ENCODE measurements at regions of chr3 and their contacts with region 1.

Region 1: DNA sequence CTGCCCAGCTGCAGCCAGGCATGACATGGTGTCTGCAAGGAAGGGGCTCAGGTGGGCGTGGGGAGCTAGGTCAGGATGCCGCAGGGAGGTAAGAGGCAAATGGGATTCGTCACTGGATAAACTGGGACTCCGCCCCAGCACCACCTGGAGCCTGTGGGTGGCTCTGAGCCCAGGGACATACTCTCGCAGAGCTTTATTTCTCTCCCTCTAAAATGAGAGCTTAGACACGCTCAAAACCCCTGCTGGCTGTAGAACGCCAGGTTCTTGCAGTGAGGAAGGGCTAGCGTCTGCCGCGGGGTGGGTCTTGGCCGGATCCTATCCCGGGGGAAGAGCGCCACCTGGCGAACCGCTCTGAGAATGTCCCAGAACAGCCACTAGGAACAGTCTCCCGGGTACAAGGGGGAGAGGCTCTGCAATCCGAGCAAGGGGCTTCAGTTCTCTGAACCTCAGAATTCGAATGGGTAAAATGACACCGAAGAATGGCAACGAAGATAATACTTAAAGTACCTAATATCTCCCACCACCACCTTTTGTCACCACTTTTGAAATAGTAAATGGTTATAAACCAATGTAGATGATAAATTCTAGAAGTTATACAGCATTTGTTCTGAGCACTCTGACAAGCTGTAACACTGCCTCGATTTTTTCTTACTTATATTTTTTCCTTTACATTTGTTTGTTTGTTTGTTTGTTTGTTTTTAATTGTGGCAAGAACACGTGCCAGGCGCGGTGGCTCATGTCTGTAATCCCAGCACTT is 53.2 kb upstream of the SRGAP3 start:
- DNase-seq: peak; percentile 83
- H3K4me3 Mint-ChIP-seq: no peak overlapping the region
- H3K27ac Mint-ChIP-seq: peak overlapping the region; percentile 23
- H3K4me1 Mint-ChIP-seq: peaks cover 14% of the 10 kb centered on the region
- H3K27me3 Mint-ChIP-seq: no peaks in the 10 kb centered on the region

Region 2: DNA sequence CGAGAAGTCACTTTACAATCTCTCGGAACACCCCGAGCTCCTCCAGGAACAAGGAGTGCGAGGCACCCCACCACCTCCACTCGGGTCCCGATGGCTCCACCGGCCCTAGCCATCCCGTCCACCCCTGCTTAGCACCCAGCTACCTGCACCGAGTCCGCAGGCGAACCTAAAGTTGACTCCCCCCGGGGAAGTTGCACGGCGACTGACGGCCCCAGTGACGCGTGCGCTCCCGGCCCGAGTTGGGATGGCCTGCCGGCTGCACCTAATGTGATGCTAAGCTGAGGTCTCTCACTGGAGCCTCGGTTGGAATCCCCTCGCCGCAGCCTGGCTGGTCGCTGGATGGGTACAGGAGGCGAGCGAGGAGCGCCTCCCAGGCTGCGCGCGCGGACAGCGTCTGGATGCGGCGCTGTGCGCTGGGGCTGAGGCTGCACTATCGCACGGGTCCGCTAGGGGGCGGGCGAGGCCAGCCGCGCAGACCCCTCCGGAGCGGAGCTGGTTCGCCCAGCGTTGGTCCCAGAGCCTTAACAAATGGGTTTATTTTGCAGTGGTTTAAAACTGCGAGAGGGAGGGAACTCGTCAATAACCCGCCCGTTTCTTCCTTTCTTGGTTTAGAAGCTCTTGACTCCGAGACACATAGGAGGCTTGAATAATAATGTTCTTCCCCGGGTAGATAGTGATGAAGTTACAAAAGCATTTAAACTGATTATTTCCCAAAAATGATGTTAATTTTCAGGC is 533.3 kb before region 1 on chr3 and contains the start of gene OXTR:
- CTCF ChIA-PET with region 1: no interaction called
- POLR2A ChIA-PET with region 1: no interaction called
- intact Hi-C with region 1: loop called (anchors 5 kb)
- DNase-seq: peak; percentile 69
- H3K4me3 Mint-ChIP-seq: peak within 1 kb of the TSS; percentile 1
- H3K27ac Mint-ChIP-seq: no peak within 1 kb of the TSS
- H3K4me1 Mint-ChIP-seq: peaks cover 15% of the 10 kb centered on the region
- H3K27me3 Mint-ChIP-seq: peaks cover 32% of the 10 kb centered on the region
- total RNA-seq, gene OXTR: 0.64 to 1.1 TPM

Region 3: DNA sequence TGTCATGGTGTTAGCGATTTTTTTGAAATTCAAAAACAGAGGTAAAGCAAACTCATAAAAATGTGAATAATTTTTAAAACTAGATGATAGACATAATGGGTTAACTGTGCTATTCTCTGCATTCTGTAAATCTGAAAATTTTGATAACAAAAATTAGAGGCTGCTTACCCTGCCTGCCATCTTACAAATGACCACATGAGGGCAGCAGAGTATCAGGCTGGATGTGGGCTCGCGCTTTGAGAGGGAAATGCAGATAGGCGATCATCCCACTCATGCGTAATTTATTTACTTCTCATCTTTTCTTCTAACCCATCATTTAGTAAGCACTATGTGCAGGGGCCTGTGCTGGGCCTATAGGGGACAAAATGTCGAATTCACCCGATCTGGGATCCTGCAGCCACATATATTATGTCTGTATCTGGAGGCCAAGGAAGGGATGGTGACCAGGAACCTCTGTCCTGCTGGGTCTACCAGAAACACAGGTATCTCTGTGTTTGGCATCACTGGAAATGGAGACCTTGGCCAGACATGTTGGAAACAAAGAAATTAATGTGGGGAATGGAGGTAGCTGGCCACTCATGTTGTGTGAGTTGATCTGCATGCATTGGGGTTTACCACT is 331.5 kb before region 1 on chr3:
- CTCF ChIA-PET with region 1: interaction called, 176 read pairs
- POLR2A ChIA-PET with region 1: no interaction called
- intact Hi-C with region 1: loop called (anchors 1 kb)
- DNase-seq: peak; percentile 79
- H3K4me3 Mint-ChIP-seq: no peak overlapping the region
- H3K27ac Mint-ChIP-seq: no peak overlapping the region
- H3K4me1 Mint-ChIP-seq: peaks cover 3% of the 10 kb centered on the region
- H3K27me3 Mint-ChIP-seq: peaks cover 2% of the 10 kb centered on the region

Region 4: GRCh38 chr3:8987645-8988383 is 314.8 kb before region 1 on chr3:
- CTCF ChIA-PET with region 1: interaction called, 96 read pairs
- POLR2A ChIA-PET with region 1: interaction called, 3 read pairs
- intact Hi-C with region 1: loop called (anchors 1 kb)
- DNase-seq: peak; percentile 79
- H3K4me3 Mint-ChIP-seq: no peak overlapping the region
- H3K27ac Mint-ChIP-seq: no peak overlapping the region
- H3K4me1 Mint-ChIP-seq: peaks cover 3% of the 10 kb centered on the region
- H3K27me3 Mint-ChIP-seq: no peaks in the 10 kb centered on the region

Region 5: GRCh38 chr3:9067352-9067975 is 235.1 kb before region 1 on chr3:
- CTCF ChIA-PET with region 1: interaction called, 10 read pairs
- POLR2A ChIA-PET with region 1: no interaction called
- intact Hi-C with region 1: no loop called
- DNase-seq: peak; percentile 40
- H3K4me3 Mint-ChIP-seq: no peak overlapping the region
- H3K27ac Mint-ChIP-seq: no peak overlapping the region
- H3K4me1 Mint-ChIP-seq: no peaks in the 10 kb centered on the region
- H3K27me3 Mint-ChIP-seq: no peaks in the 10 kb centered on the region

Region 6: DNA sequence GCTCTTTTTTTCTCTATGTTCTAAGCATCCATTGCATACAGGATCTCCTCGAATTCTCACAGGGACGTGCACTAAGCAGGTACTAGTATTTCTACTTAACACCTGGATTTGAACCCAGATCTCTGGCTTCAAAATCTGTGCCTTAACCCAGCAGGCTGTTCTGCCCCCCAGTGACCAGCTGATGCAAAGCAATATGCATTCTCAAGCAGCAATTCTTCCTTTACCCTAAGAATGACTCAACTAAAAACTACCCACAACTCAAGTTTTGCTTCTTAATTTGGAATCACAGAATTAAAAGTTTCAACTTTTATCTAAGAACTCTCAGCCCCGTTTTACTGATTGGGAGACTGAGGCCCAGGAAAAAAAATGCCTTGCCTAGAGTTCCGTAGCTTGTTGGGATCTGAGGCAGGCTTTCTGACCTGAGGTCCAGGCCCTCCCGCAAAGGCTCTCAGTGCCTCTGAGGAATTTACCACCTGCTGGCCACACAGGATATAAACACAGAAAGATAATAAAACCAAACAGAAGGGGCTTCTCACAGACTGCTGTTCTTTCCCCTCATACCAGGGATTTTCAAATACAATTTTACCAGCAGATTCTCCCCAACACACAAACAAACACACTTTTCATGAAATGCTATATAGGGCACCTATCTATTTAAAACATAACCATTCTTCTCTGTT is 223.9 kb before region 1 on chr3:
- CTCF ChIA-PET with region 1: no interaction called
- POLR2A ChIA-PET with region 1: no interaction called
- intact Hi-C with region 1: loop called (anchors 5 kb)
- DNase-seq: peak; percentile 18
- H3K4me3 Mint-ChIP-seq: no peak overlapping the region
- H3K27ac Mint-ChIP-seq: no peak overlapping the region
- H3K4me1 Mint-ChIP-seq: peaks cover 9% of the 10 kb centered on the region
- H3K27me3 Mint-ChIP-seq: peaks cover 2% of the 10 kb centered on the region

Region 7: DNA sequence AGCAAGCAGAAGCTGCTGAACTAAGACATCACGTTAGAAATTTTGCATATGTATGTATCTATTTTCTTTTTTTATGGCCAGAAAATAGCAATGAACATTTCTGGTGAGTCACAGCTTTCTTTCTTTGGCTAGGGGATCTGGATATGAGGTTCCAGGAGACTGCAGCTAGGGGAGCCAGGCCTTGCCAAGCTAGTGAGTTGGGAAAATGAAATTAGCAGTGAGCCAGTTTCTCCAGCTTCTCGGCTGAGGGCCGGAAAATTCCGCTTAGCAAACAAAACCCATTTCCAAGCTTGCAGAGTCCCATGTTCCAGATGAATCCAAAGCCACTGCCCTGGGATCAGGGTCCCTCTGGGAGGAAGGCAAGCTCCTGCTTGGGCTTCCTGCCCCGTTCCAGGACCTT is 190.7 kb before region 1 on chr3:
- CTCF ChIA-PET with region 1: no interaction called
- POLR2A ChIA-PET with region 1: no interaction called
- intact Hi-C with region 1: no loop called
- DNase-seq: no peak
- H3K4me3 Mint-ChIP-seq: no peak overlapping the region
- H3K27ac Mint-ChIP-seq: no peak overlapping the region
- H3K4me1 Mint-ChIP-seq: no peaks in the 10 kb centered on the region
- H3K27me3 Mint-ChIP-seq: no peaks in the 10 kb centered on the region

Region 8: DNA sequence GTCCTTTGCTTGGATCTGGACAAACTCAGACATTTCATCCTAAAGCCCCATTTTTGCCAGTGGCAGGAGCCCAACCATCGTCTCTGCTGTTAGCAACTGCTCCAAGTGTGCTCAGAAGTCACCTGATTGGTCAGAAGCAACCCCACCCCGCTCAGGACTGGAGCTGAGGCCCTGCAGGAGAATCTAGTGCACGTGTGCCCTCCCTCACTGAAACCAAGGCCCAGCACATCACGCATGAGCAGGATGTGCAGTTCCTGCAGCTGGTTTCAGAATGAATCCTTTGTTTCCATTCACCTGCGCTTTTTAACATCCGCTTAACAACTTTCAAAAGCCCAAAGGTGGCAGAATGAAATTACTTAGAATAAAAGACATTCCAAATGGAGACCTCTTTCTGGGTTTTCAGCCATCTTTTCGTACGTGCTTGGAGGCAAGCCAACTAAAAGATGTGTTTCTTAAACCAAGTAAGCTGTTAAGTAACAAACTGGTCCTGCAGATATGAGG is 134.3 kb before region 1 on chr3:
- CTCF ChIA-PET with region 1: interaction called, 5 read pairs
- POLR2A ChIA-PET with region 1: no interaction called
- intact Hi-C with region 1: loop called (anchors 2 kb)
- DNase-seq: peak; percentile 82
- H3K4me3 Mint-ChIP-seq: no peak overlapping the region
- H3K27ac Mint-ChIP-seq: no peak overlapping the region
- H3K4me1 Mint-ChIP-seq: no peaks in the 10 kb centered on the region
- H3K27me3 Mint-ChIP-seq: no peaks in the 10 kb centered on the region

Region 9: DNA sequence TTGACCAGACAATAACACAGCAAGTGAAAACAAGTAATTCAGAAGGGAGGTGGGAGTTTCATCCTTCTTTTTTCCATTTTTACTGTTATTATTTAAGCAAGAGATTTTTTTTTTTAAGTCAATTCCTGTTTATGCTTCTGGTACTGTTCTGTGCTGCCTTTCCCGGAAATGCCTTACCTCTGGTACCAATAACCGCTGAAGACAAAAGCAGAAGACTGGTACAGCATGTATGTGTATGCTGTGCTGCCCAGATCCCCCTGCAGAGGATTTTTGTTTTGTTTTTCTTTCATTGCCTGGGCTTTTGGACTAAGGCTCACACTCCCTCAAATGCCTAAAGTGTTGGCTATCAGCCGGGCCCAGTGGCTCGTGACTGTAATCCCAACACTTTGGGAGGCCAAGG is 31.9 kb before region 1 on chr3:
- CTCF ChIA-PET with region 1: no interaction called
- POLR2A ChIA-PET with region 1: no interaction called
- intact Hi-C with region 1: no loop called
- DNase-seq: no peak
- H3K4me3 Mint-ChIP-seq: no peak overlapping the region
- H3K27ac Mint-ChIP-seq: no peak overlapping the region
- H3K4me1 Mint-ChIP-seq: no peaks in the 10 kb centered on the region
- H3K27me3 Mint-ChIP-seq: no peaks in the 10 kb centered on the region